HepG2 (cell line): ENCODE measurements at regions of chr1 and their contacts with region 1.

Region 1: DNA sequence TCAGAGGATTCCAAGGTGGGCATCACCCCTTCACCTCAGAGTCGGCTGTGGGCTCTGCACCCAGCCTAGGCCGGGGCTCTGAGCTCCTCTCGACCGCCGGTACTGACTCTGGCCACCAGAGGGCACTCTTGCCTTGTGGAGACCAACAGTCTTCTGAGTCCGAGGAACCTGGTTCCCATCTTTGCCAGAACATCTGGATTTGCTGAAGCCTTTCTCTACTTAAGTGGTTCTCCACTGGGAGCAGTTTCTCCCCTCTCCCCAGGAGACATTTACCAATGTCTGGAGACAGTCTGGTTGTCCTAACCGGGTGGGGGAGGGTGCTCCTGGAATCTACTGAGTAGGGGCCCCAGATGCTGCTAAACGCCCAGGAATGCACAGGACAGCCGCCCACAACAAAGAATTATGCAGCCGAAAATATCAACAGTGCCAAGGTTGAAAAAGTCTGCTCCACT is 9.4 kb downstream of the ETV3L start:
- DNase-seq: peak; percentile 64
- ATAC-seq: peak; percentile 94
- H3K4me3 ChIP-seq: no peak overlapping the region
- H3K27ac ChIP-seq: no peak overlapping the region
- H3K4me1 ChIP-seq: peaks cover 12% of the 10 kb centered on the region
- H3K27me3 ChIP-seq: peaks cover 0 to 22% of the 10 kb centered on the region in 2 experiments; a peak in 3 of 5 replicates
- CTCF ChIP-seq: peak; percentile 92
- EP300 ChIP-seq: no peak
- POLR2A ChIP-seq: no peak
- RAD21 ChIP-seq: peak; percentile 86

Region 2: DNA sequence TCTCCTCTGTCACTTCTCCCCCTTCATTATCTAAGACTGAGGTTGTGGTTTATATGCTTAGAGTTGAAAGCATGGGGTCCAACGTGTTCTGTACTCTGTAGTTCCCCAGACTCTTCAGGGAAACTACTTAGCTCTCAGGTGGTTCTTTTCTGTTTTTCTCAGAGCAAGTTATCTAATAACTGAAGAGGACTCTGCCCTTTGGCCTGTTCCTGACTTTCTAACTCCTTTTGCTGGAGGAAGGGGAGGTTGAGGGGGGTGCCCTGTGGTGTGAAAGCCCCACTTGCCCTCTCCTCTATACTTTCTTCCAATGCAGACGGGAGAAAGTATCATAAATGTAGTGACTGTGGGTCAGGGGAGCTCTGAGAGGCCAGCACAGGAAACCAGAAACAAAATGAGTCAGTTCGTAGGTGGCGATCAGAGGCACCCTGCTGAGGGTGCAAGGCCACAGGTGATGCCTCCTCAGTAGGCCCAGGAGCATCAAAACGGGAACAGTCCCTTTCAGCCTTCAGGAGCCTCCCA is 891.3 kb before region 1 on chr1:
- CTCF ChIA-PET with region 1: no interaction called
- POLR2A ChIA-PET with region 1: no interaction called
- in situ Hi-C with region 1: no loop called
- intact Hi-C with region 1: loop called (anchors 10 kb)
- DNase-seq: no peak
- ATAC-seq: no peak
- H3K4me3 ChIP-seq: no peak overlapping the region
- H3K27ac ChIP-seq: peak overlapping the region; percentile 15
- H3K4me1 ChIP-seq: peaks cover 50% of the 10 kb centered on the region
- H3K27me3 ChIP-seq: no peaks in the 10 kb centered on the region; a peak in 1 of 5 replicates
- CTCF ChIP-seq: no peak
- EP300 ChIP-seq: no peak
- POLR2A ChIP-seq: no peak
- RAD21 ChIP-seq: no peak

Region 3: GRCh38 chr1:157138220-157139051 is 48.2 kb after region 1 on chr1 and contains the start of gene ETV3:
- CTCF ChIA-PET with region 1: no interaction called
- POLR2A ChIA-PET with region 1: no interaction called
- in situ Hi-C with region 1: no loop called
- intact Hi-C with region 1: loop called (anchors 5 kb)
- DNase-seq: peak; percentile 83
- ATAC-seq: peak; percentile 94
- H3K4me3 ChIP-seq: peak within 1 kb of the TSS; percentile 91 to 99 (median 97)
- H3K27ac ChIP-seq: peak within 1 kb of the TSS; percentile 84
- H3K4me1 ChIP-seq: peaks cover 33% of the 10 kb centered on the region
- H3K27me3 ChIP-seq: no peaks in the 10 kb centered on the region; a peak in 1 of 5 replicates
- CTCF ChIP-seq: no peak
- EP300 ChIP-seq: 0 out of 4 replicates have a peak, but pooled peaks of 1 of the 2 experiments have one; percentile 19
- POLR2A ChIP-seq: peak; percentile 54 to 86
- RAD21 ChIP-seq: no peak
- total RNA-seq, gene ETV3: 5.8 and 8.5 TPM in 2 replicates

Region 4: DNA sequence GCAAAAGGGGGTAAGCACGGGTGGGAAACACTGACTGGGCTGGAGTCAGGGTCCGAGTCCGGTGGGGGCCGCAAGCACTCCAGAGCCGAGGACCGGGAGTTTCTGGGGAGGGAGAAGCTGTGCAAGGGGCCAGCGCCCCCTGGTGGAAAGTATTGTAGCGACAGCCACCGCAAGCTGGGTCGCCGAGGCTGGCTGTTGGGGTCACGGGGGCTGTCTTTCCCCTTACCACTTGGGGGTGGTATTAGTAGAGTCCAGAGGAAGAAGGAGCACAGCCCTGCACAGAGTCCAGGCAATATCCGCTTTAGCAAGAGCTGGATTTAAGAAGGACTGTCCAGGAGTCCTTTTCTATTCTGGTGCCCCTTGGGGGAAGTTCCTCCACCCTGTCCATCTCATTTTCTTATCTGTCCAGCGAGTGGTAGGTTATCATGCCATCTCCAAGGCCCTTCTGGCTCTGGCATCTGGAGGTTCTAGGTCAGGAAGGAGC is 65.9 kb after region 1 on chr1:
- CTCF ChIA-PET with region 1: interaction called, 71 read pairs
- POLR2A ChIA-PET with region 1: interaction called, 16 read pairs
- in situ Hi-C with region 1: loop called (anchors 5 kb)
- intact Hi-C with region 1: loop called (anchors 1 kb)
- DNase-seq: peak; percentile 57
- ATAC-seq: peak; percentile 80
- H3K4me3 ChIP-seq: peak overlapping the region; percentile 21 to 62 (median 56); a peak in 4 of 6 replicates
- H3K27ac ChIP-seq: no peak overlapping the region
- H3K4me1 ChIP-seq: peaks cover 31% of the 10 kb centered on the region
- H3K27me3 ChIP-seq: peaks cover 3 to 21% of the 10 kb centered on the region in 2 experiments; a peak in 4 of 5 replicates
- CTCF ChIP-seq: peak; percentile 93
- EP300 ChIP-seq: no peak
- POLR2A ChIP-seq: no peak
- RAD21 ChIP-seq: peak; percentile 83